ENCODE measurements at regions of chr17 and their contacts with region 1.

Region 1: GRCh38 chr17:49969795-49970389 is 902 bp downstream of the DLX4 start:
- DNase-seq: no peak
- ATAC-seq: no peak
- H3K4me3 ChIP-seq: no peak overlapping the region
- H3K27ac ChIP-seq: no peak overlapping the region
- H3K4me1 ChIP-seq: no peaks in the 10 kb centered on the region
- H3K27me3 ChIP-seq: peaks cover 85% of the 10 kb centered on the region
- CTCF ChIP-seq: no peak

Region 2: DNA sequence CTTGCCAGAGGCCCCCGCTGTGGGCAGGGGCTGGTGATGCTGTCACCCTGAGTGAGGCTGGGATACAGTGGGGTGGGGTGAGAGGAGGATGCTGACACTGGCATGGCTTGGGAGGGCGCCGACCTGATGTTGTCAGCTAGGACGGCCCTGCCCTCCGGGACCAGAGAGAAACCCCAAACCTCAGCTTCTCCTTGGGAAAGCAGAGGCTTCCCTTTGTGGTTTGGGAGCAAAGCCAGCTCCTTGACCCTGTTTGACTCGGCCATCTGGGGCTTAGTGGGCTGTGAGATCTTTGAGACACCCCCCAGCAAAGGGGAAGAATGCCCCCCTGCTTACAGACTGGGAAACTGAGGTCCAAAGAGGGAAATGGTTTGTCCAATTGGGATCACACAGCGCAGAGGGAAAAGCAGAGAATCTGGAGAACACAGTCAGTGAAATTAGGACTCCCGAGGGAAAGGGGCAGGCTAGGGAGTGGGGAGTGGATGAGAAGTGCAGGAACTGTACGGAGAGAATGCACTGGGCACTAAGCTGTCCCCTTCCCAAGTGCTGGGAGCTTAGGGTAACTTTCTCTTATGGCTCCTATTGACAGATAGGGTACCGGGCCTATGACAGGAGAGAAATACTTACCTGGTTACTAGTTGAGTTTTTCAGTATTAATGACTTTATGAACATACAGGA is 41.6 kb before region 1 on chr17:
- CTCF ChIA-PET with region 1: no interaction called
- POLR2A ChIA-PET with region 1: interaction called, 12 read pairs
- intact Hi-C with region 1: no loop called
- DNase-seq: no peak
- ATAC-seq: no peak
- H3K4me3 ChIP-seq: no peak overlapping the region
- H3K27ac ChIP-seq: no peak overlapping the region
- H3K4me1 ChIP-seq: peaks cover 11% of the 10 kb centered on the region
- H3K27me3 ChIP-seq: 0 out of 2 replicates have a peak, but pooled peaks cover 5% of the 10 kb centered on the region
- CTCF ChIP-seq: no peak

Region 3: GRCh38 chr17:50055426-50056230 is 85.7 kb after region 1 on chr17 and contains the start of gene ITGA3:
- CTCF ChIA-PET with region 1: no interaction called
- POLR2A ChIA-PET with region 1: no interaction called
- intact Hi-C with region 1: no loop called
- DNase-seq: peak; percentile 98
- ATAC-seq: peak; percentile 36
- H3K4me3 ChIP-seq: peak within 1 kb of the TSS; percentile 90
- H3K27ac ChIP-seq: peak within 1 kb of the TSS; percentile 96
- H3K4me1 ChIP-seq: peaks cover 79% of the 10 kb centered on the region
- H3K27me3 ChIP-seq: no peaks in the 10 kb centered on the region
- CTCF ChIP-seq: no peak
- total RNA-seq, gene ITGA3: 598 and 763 TPM in 2 replicates